Dorsolateral prefrontal cortex (tissue), 120 donors: ENCODE measurements at regions of chr22 and their contacts with region 1.

Region 1: GRCh38 chr22:19495562-19496323 is 16.0 kb downstream of the CDC45 start:
- DNase-seq: no peak
- H3K4me3 ChIP-seq: no peak overlapping the region
- H3K27ac ChIP-seq: no peak overlapping the region
- H3K27me3 ChIP-seq: peaks cover 0 to 3% (median 0%) of the 10 kb centered on the region in 45 donors
- CTCF ChIP-seq: peak in 27 of 56 donors; percentile 11 to 45 (median 25)

Region 2: GRCh38 chr22:19619144-19620009 is 123.6 kb after region 1 on chr22:
- intact Hi-C with region 1: loop called in 1 of 2 experiments (anchors 5 kb)
- DNase-seq: no peak
- H3K4me3 ChIP-seq: no peak overlapping the region
- H3K27ac ChIP-seq: peak overlapping the region in 6 of 59 donors; percentile 6 to 66 (median 26)
- H3K27me3 ChIP-seq: peaks cover 0 to 7% (median 0%) of the 10 kb centered on the region in 45 donors
- CTCF ChIP-seq: no peak